Heart right ventricle (tissue), 16 donors: ENCODE measurements at regions of chr15 and their contacts with region 1.

Region 1: GRCh38 chr15:99895189-99895955 is 162.1 kb upstream of the LYSMD4 start:
- DNase-seq: no peak
- ATAC-seq: no peak
- H3K4me3 ChIP-seq: no peak overlapping the region
- H3K27ac ChIP-seq: no peak overlapping the region
- H3K4me1 ChIP-seq: no peaks in the 10 kb centered on the region
- H3K27me3 ChIP-seq: no peaks in the 10 kb centered on the region
- CTCF ChIP-seq: no peak

Region 2: DNA sequence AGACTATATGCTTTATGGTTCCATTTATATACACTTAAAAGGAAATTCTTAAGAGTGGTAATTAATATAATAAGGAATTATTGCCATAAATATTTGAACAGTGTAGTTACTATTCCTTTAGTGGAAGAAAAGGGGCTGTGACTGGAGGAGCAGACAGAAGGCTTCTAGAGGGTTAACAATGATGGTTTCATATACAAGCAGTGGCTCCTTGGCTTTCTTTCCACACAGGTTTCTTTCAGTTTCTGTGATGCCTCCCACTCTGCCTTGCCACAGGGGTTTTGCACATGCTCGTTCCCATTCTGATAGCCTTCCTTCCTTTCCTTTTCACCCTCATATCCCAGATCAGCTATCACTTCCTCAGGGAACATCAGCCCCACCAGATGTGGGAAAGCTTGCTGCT is 53.3 kb before region 1 on chr15:
- intact Hi-C with region 1: loop called in 1 of 10 experiments (anchors 10 kb)
- DNase-seq: no peak
- ATAC-seq: no peak
- H3K4me3 ChIP-seq: no peak overlapping the region
- H3K27ac ChIP-seq: no peak overlapping the region
- H3K4me1 ChIP-seq: no peaks in the 10 kb centered on the region
- H3K27me3 ChIP-seq: no peaks in the 10 kb centered on the region
- CTCF ChIP-seq: no peak

Region 3: GRCh38 chr15:100944244-100944895 is 1049.0 kb after region 1 on chr15:
- intact Hi-C with region 1: no loop called
- DNase-seq: no peak
- ATAC-seq: peak in 2 of 8 donors; percentile 16 to 24
- H3K4me3 ChIP-seq: peak overlapping the region in 1 of 10 donors; percentile 4
- H3K27ac ChIP-seq: peak overlapping the region in 1 of 10 donors; percentile 29
- H3K4me1 ChIP-seq: peaks cover 0 to 48% (median 6%) of the 10 kb centered on the region in 9 donors
- H3K27me3 ChIP-seq: peaks cover 0 to 6% (median 0%) of the 10 kb centered on the region in 7 donors
- CTCF ChIP-seq: no peak